Mucosa of descending colon (tissue), 3 donors: ENCODE measurements at regions of chr1 and their contacts with region 1.

Region 1: DNA sequence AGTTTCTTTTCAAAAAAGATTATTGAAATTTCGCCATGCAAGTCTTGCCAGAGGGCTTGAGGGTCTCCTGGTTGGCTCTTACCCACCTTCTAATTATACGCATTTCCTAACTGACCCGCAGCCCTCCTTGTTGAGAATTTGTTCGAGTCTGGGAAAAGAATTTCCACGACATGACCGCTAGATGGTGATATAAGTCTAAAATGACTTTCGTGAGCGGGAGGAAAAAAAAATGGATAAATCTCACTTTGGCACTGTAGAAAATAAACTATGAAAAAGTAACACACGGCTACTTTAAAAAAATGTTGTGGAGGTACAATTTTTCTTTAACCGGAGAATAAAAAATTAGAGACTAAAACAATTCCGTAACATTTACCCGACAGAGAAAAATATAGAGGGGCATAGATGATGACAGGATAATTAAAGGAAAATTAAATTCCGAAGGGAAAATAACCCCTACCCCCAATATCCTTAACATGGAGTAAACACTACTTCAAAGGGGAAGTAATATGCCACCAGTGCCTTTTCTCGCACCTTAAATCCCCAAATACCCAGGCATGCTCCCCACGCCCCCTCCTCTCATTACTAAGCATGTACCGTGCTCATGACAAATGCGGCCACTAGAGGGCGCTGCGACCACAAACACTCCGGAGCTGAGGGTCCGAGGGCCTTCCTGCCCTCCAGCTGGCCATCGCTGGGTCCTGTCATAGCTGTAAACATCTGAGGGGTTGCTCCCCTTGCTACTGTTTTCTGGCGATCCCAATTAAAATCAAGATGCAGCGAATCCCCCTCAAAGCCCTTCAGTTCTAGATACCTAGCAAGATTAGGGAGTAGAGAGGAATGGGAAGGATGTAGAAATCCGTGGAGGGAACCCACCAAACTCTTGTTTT is 266.9 kb downstream of the ASTN1 start:
- DNase-seq: peak in 2 of 3 donors; percentile 37 to 59
- ATAC-seq: no peak
- H3K4me3 ChIP-seq: no peak overlapping the region
- H3K4me1 ChIP-seq: no peaks in the 10 kb centered on the region
- CTCF ChIP-seq: peak; percentile 28

Region 2: DNA sequence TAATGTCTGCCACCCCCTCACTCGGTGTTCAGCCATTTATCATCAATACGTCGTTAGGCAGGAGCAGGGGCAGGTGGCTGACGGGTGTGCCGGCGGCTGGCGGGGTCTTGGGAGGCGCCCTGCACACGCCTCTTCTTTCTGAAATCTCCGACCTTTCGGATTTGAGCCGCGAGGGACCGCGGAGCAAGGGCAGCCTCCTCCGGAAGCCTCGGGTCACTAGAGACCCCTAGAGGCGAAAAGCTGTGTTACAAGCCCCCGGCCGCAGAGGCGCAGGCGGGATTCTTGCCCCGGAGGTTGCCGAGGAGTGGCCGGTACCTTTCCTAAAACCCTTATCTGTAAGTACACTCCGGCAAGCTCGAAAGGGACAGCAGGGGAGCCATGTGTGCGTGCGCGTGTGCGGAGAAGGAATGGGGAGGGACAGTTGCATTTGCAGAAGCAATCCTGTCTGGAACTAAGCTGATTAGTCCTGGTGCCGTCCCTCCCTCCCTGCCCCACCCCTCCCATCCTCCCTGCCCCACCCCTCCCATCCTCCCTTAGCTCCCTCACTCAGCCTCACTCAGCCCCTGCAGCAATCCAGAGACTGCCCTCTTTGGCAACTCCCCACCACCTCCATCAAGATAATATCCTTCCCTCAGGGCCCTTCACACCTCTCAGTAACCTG is 284.2 kb after region 1 on chr1:
- intact Hi-C with region 1: loop called in 1 of 2 experiments (anchors 10 kb)
- DNase-seq: peak in 2 of 3 donors; percentile 58
- ATAC-seq: peak; percentile 77
- H3K4me3 ChIP-seq: no peak overlapping the region
- H3K4me1 ChIP-seq: no peaks in the 10 kb centered on the region
- CTCF ChIP-seq: peak; percentile 62

Region 3: DNA sequence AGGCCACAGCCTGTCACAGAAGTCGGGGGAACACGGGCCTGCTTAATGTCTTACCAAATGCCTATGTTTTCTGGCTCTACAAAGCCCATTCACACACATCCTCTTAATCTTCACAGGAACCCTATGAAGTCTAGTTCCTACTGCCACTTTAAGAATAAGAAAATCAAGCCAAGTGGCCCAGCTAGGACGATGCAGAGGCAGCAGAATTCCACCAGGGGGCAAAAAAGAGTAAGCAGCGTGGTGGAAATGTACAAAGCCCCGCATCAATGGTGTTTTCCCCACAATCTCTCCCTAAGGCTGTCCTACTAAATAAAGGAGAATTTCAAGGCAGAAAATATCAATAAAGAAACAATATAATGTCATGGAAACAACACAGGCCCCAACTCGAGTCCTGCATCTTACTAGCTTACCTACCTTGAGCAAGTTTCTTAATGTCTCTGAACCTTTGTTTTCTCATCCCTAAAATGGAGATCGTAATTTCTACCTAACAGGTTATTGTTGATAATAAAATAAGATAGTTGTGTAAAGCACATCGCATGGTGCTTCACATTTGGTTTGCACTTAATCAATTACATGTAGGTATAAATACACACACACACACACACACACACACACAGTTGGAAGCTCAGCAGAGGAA is 1050.9 kb after region 1 on chr1:
- intact Hi-C with region 1: loop called (anchors 10 kb)
- DNase-seq: peak in 2 of 3 donors; percentile 50 to 67
- ATAC-seq: peak; percentile 84
- H3K4me3 ChIP-seq: no peak overlapping the region
- H3K4me1 ChIP-seq: no peaks in the 10 kb centered on the region
- CTCF ChIP-seq: peak; percentile 72